ENCODE measurements at regions of chr2 and their contacts with region 1.

Region 1: GRCh38 chr2:182186132-182186735 is 200.6 kb downstream of the PPP1R1C start:
- DNase-seq: peak; percentile 66
- H3K4me3 Mint-ChIP-seq: no peak overlapping the region
- H3K27ac Mint-ChIP-seq: no peak overlapping the region
- H3K4me1 Mint-ChIP-seq: no peaks in the 10 kb centered on the region
- H3K27me3 Mint-ChIP-seq: no peaks in the 10 kb centered on the region
- CTCF ChIP-seq: peak; percentile 58

Region 2: GRCh38 chr2:181780047-181780651 is 406.1 kb before region 1 on chr2:
- CTCF ChIA-PET with region 1: no interaction called
- POLR2A ChIA-PET with region 1: no interaction called
- intact Hi-C with region 1: no loop called
- DNase-seq: no peak
- H3K4me3 Mint-ChIP-seq: no peak overlapping the region
- H3K27ac Mint-ChIP-seq: no peak overlapping the region
- H3K4me1 Mint-ChIP-seq: peaks cover 6% of the 10 kb centered on the region
- H3K27me3 Mint-ChIP-seq: no peaks in the 10 kb centered on the region
- CTCF ChIP-seq: no peak

Region 3: DNA sequence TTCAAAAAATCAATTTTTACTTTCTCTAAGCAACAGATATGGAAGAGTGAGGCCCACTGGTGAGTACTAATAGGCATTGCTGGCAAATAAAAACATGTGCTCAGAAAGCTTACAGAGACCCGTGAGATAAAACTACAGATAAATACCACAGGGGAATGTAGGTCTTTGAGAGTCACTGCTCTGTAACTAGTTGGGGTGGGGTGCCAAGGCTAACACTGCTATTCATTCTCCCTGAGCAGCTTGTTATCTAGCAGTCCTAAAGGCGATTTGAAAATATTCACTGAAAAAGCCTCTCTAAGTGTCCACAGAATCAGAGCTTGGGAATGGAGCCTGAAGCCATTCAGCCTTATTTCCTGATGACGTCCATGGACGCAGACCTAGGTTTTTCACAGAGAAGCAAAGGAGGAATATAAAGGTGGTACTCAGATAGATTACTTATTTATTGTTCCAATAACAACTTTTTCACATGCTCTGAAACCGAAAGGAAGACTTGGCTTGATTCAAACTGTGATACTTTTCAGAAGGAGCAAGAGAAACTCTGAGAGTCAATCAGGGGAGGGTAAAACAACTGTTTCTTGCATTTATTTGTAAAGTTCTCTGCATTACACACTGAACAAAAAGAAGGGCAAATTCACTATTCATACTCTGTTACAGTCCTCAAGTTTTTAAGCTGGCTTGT is 12.2 kb before region 1 on chr2:
- CTCF ChIA-PET with region 1: interaction called, 12 read pairs
- POLR2A ChIA-PET with region 1: no interaction called
- intact Hi-C with region 1: no loop called
- DNase-seq: no peak
- H3K4me3 Mint-ChIP-seq: no peak overlapping the region
- H3K27ac Mint-ChIP-seq: no peak overlapping the region
- H3K4me1 Mint-ChIP-seq: no peaks in the 10 kb centered on the region
- H3K27me3 Mint-ChIP-seq: no peaks in the 10 kb centered on the region
- CTCF ChIP-seq: no peak

Region 4: DNA sequence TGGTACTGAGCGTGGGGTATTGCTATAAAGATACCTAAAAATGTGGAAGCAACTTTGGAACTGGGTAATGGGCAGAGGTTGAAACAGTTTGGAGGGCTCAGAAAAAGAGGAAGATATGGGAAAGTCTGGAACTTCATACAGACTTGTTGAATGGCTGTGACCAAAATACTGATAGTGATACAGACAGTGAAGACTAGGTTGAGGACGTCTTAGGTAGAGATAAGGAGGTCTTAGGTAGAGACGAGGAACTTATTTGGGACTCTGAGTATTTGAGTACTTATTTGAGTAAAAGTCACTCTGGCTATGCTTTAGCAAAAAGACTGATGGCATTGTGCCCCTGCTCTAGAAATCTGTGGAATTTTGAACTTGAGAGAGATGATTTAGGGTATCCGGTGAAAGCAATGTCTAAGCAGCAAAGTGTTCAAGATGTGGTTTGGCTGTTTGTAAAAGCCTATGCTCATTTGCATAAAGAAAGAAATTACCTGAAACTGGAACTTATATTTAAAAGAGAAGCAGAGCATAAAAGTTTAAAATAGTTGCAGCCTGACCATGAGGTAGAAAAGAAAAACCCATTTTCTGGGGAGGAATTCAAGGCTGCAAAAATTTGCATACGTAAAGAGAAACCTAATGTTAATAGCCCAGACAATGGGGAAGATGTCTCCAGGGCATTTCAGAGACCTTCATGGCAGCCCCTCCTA is 21.0 kb after region 1 on chr2:
- CTCF ChIA-PET with region 1: no interaction called
- POLR2A ChIA-PET with region 1: no interaction called
- intact Hi-C with region 1: no loop called
- DNase-seq: no peak
- H3K4me3 Mint-ChIP-seq: no peak overlapping the region
- H3K27ac Mint-ChIP-seq: no peak overlapping the region
- H3K4me1 Mint-ChIP-seq: no peaks in the 10 kb centered on the region
- H3K27me3 Mint-ChIP-seq: no peaks in the 10 kb centered on the region
- CTCF ChIP-seq: no peak

Region 5: DNA sequence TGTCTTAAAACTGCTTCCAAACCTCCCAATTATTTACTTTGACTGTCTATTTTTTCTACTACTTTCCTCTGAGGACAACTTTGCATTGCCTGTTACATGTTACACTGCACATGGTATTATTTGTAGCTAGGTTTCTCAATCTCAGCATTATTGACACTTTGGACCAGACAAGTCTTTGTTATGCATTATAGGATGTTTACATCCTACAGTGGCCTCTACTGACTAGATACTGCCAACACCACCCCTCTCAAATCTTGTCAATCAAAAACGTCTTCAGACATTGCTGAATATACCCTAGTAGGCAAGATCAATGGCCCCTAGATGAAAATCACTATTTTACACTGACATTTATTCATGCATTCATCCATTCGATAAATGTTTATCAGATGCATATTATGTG is 400.2 kb after region 1 on chr2:
- CTCF ChIA-PET with region 1: interaction called, 4 read pairs
- POLR2A ChIA-PET with region 1: no interaction called
- intact Hi-C with region 1: loop called (anchors 5 kb)
- DNase-seq: peak; percentile 6
- H3K4me3 Mint-ChIP-seq: no peak overlapping the region
- H3K27ac Mint-ChIP-seq: no peak overlapping the region
- H3K4me1 Mint-ChIP-seq: peaks cover 14% of the 10 kb centered on the region
- H3K27me3 Mint-ChIP-seq: no peaks in the 10 kb centered on the region
- CTCF ChIP-seq: no peak

Region 6: GRCh38 chr2:182971820-182972547 is 785.8 kb after region 1 on chr2:
- CTCF ChIA-PET with region 1: no interaction called
- POLR2A ChIA-PET with region 1: no interaction called
- intact Hi-C with region 1: loop called (anchors 5 kb)
- DNase-seq: no peak
- H3K4me3 Mint-ChIP-seq: no peak overlapping the region
- H3K27ac Mint-ChIP-seq: no peak overlapping the region
- H3K4me1 Mint-ChIP-seq: peaks cover 18% of the 10 kb centered on the region
- H3K27me3 Mint-ChIP-seq: no peaks in the 10 kb centered on the region
- CTCF ChIP-seq: no peak

Region 7: GRCh38 chr2:183093857-183094657 is 907.8 kb after region 1 on chr2:
- CTCF ChIA-PET with region 1: no interaction called
- POLR2A ChIA-PET with region 1: no interaction called
- intact Hi-C with region 1: loop called (anchors 10 kb)
- DNase-seq: peak; percentile 47
- H3K4me3 Mint-ChIP-seq: no peak overlapping the region
- H3K27ac Mint-ChIP-seq: no peak overlapping the region
- H3K4me1 Mint-ChIP-seq: peaks cover 5% of the 10 kb centered on the region
- H3K27me3 Mint-ChIP-seq: no peaks in the 10 kb centered on the region
- CTCF ChIP-seq: peak; percentile 27